ENCODE measurements at regions of chr6 and their contacts with region 1.

Region 1: GRCh38 chr6:33607784-33608161 is 13.3 kb upstream of the ITPR3 start:
- DNase-seq: peak; percentile 70
- CTCF ChIP-seq: peak; percentile 55

Region 2: GRCh38 chr6:33579828-33580714 is 27.7 kb before region 1 on chr6 and contains the start of gene BAK1:
- CTCF ChIA-PET with region 1: interaction called, 73 read pairs
- POLR2A ChIA-PET with region 1: no interaction called
- DNase-seq: peak; percentile 94
- CTCF ChIP-seq: peak; percentile 48

Region 3: DNA sequence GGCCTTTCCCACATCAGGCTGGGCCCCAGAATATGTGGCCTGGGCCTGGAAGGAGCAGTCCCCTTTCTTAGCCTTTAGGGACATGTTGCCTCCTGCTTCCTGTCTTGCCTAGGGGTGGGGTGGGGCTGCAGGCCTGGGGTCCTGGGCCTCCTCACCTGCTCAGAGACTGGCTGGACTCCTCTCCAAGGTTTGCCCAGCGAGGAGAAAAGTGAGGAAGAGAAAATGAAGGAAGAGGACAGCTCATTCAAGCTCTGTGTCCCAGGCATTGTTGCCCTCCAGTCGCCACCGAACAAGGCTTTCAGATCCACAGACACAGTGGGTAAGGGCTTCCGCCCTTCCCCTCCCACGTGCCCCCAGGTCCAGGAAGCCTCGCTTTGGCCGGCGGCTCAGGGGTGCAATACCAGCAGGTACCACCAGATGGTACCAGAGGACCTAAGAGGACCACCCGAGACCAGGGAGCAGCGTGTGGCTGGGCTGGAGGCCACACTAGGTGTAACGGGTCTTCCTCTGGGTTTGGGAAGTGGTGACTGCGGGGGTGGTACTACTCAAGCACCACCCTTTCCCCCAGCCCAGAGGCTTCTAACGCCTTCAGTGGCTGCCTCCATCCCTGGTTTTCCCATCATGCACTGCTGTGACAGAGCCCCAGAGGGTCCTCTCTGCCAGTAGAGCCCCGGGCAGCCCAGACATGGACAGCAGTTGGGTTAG is 22.2 kb before region 1 on chr6:
- CTCF ChIA-PET with region 1: interaction called, 73 read pairs
- POLR2A ChIA-PET with region 1: no interaction called
- DNase-seq: peak; percentile 87
- CTCF ChIP-seq: peak; percentile 99

Region 4: DNA sequence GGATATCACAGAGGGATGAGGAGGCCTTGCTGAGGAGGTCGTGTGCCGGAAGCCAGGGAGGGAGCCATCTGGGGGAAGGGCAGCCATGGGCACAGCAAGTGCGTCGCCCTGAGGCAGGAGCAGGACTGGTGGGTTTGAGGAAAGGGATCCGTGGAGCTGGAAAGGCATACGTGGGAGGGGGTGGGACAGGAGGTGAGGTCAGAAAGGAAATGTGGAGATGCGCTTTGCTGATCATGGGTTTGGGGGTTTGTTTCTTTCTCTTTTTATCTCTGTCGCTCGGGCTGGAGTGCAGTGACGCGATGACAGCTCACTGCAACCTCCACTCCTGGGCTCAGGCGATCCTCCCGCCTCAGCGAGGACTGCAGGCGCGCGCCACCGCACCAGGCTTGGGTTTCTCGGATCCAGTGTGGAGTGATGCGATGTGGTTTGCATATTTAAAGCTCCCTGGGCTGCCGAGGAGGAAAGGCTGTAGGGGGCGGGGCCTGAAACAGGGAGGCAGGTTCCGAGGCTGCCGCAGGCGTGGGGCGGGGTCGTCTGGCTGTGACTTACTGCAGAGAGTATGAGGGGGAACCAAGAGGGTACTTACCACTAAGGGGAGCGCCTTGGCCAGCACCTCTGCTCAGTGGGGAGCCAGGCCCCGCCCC is 15.2 kb before region 1 on chr6:
- CTCF ChIA-PET with region 1: interaction called, 73 read pairs
- POLR2A ChIA-PET with region 1: no interaction called
- DNase-seq: no peak
- CTCF ChIP-seq: no peak

Region 5: DNA sequence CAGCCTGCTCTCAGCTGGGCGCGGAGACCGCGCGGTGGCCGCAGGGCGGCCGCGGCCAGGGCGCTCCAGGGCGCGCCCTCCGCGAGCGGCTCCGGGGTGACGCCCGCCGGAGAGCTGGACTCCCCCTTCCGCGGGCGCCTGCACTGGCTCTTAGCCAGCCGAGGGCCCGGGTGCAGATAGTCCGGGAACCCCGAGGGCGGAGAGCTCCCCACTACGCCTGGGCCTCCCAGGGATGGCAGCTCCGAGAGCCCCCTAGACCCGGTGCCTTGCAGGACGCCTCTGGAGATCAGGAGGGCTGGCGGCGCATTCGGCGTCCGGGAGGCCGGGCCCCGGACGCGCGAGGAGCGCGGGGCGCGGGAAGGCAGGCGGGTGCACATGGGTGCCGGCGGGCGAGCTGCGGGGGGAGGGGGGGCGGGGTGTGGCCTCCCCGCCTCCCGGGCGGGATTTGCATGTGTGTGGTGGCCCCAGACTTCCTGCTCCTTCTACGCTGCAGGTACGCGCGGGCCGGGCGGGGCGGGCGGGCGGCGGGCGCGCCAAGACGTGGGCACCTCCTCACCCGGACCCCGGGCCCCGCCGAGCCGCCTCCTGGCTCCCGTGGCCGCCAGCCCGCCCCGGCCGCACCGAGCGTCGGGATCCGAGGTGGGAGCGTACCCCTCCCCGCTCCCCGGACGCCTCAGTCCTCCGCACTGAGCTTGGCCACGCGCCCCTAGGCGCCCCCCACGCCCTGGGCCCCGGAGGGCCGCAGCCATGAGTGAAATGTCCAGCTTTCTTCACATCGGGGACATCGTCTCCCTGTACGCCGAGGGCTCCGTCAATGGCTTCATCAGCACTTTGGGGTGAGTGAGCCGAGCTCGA is 13.3 kb after region 1 on chr6 and contains the start of gene ITPR3:
- CTCF ChIA-PET with region 1: interaction called, 26 read pairs
- POLR2A ChIA-PET with region 1: no interaction called
- DNase-seq: peak; percentile 97
- CTCF ChIP-seq: no peak

Region 6: GRCh38 chr6:33633462-33634158 is 25.8 kb after region 1 on chr6:
- CTCF ChIA-PET with region 1: interaction called, 14 read pairs
- POLR2A ChIA-PET with region 1: no interaction called
- DNase-seq: peak; percentile 91
- CTCF ChIP-seq: no peak

Measured in GM10248 (cell line).